Calu3 (cell line): ENCODE measurements at regions of chr14 and their contacts with region 1.

Region 1: GRCh38 chr14:64338616-64339316 is 44.6 kb upstream of the ESR2 start:
- DNase-seq: peak; percentile 93
- H3K4me3 Mint-ChIP-seq: peak overlapping the region; percentile 88
- H3K27ac Mint-ChIP-seq: peak overlapping the region; percentile 78
- H3K4me1 Mint-ChIP-seq: peaks cover 12% of the 10 kb centered on the region
- H3K27me3 Mint-ChIP-seq: no peaks in the 10 kb centered on the region
- CTCF ChIP-seq: no peak

Region 2: DNA sequence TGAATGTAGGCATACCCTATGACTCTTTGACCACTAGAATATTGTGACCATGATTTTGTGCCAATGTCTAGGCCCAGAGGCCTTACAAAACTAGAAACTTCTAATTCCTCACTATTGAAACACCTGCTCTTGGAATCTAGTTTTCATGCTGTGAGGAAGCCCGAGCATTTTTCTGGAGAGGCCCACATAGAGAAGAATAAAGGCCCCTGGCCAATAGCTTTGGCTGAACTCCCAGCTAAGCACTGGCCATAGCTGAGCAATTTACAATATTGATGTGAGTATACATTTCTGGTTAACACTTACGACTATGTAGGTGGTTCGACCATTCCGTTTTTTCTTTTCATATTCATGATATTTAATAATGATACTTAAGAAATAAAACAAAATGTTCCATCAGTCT is 1483.8 kb before region 1 on chr14:
- CTCF ChIA-PET with region 1: no interaction called
- intact Hi-C with region 1: no loop called
- DNase-seq: no peak
- H3K4me3 Mint-ChIP-seq: no peak overlapping the region
- H3K27ac Mint-ChIP-seq: no peak overlapping the region
- H3K4me1 Mint-ChIP-seq: no peaks in the 10 kb centered on the region
- H3K27me3 Mint-ChIP-seq: no peaks in the 10 kb centered on the region
- CTCF ChIP-seq: no peak

Region 3: GRCh38 chr14:64089920-64090319 is 248.8 kb before region 1 on chr14:
- CTCF ChIA-PET with region 1: no interaction called
- intact Hi-C with region 1: no loop called
- DNase-seq: no peak
- H3K4me3 Mint-ChIP-seq: no peak overlapping the region
- H3K27ac Mint-ChIP-seq: no peak overlapping the region
- H3K4me1 Mint-ChIP-seq: peaks cover 22% of the 10 kb centered on the region
- H3K27me3 Mint-ChIP-seq: no peaks in the 10 kb centered on the region
- CTCF ChIP-seq: no peak

Region 4: GRCh38 chr14:64170181-64170580 is 168.6 kb before region 1 on chr14:
- CTCF ChIA-PET with region 1: no interaction called
- intact Hi-C with region 1: no loop called
- DNase-seq: no peak
- H3K4me3 Mint-ChIP-seq: no peak overlapping the region
- H3K27ac Mint-ChIP-seq: no peak overlapping the region
- H3K4me1 Mint-ChIP-seq: no peaks in the 10 kb centered on the region
- H3K27me3 Mint-ChIP-seq: no peaks in the 10 kb centered on the region
- CTCF ChIP-seq: no peak

Region 5: DNA sequence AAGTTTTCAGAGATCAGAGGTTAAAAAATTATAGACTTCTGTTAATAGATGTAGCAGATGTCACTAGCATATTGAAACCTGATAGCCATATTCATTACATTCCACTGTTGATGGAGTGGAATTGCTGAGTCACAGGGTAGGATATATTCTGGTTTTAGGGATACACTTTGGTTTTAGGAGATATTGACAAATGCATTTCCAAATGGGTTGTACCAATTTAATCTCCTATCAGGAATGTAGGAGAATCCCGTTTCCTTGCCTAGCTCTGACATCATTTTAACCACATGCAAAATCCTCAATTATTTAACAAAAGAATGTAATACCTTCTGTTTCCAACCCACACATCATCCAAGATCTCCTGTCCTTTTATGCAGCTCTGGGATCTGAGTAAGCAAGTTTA is 13.9 kb before region 1 on chr14:
- CTCF ChIA-PET with region 1: no interaction called
- intact Hi-C with region 1: no loop called
- DNase-seq: no peak
- H3K4me3 Mint-ChIP-seq: no peak overlapping the region
- H3K27ac Mint-ChIP-seq: no peak overlapping the region
- H3K4me1 Mint-ChIP-seq: peaks cover 10% of the 10 kb centered on the region
- H3K27me3 Mint-ChIP-seq: no peaks in the 10 kb centered on the region
- CTCF ChIP-seq: no peak

Region 6: DNA sequence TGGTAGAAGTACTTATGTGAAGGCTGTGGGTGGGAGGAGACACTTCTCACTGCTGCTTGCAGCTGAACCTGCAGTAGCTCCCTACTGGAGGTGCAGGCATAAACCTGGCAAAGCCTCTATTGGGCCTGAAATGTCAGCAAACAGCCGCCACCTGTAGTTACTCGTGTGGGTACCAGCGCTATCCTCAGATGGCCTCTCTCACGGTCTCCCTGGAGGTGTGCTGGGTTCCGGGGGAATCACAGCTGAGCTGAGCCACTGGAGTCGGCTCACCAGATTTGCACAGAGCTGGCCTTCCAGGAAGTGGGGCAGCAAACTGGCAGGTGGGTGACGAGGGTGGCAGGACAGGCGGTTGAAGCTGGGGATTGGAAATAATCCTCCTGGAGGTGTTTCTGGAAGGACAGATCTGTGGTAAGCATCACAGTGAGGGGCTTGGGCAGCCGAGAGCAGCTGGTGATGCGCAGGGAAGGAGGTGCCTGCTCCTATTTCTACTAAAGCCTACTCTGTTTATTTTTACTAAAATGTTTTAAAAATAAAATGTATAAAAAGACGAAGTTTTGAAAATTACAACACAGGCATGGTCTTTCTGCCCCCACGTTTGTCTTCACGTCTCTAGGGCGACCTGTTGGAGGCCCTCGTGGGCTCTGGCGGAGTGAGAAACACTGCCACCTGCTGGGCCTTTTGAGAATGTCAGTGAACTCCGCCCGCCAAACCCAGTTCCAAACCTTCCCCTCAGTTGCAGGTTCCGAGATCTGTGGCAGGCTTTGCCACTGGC is 297.6 kb after region 1 on chr14:
- CTCF ChIA-PET with region 1: no interaction called
- intact Hi-C with region 1: loop called (anchors 5 kb)
- DNase-seq: peak; percentile 70
- H3K4me3 Mint-ChIP-seq: no peak overlapping the region
- H3K27ac Mint-ChIP-seq: no peak overlapping the region
- H3K4me1 Mint-ChIP-seq: peaks cover 10% of the 10 kb centered on the region
- H3K27me3 Mint-ChIP-seq: no peaks in the 10 kb centered on the region
- CTCF ChIP-seq: peak; percentile 82